GM12878 (cell line): ENCODE measurements at regions of chr20 and their contacts with region 1.

Region 1: GRCh38 chr20:20237093-20237959 is 130.6 kb upstream of the INSM1 start:
- DNase-seq: no peak
- ATAC-seq: peak; percentile 91
- H3K4me3 ChIP-seq: no peak overlapping the region
- H3K27ac ChIP-seq: no peak overlapping the region
- H3K4me1 ChIP-seq: no peaks in the 10 kb centered on the region
- H3K27me3 ChIP-seq: no peaks in the 10 kb centered on the region; a peak in 1 of 4 replicates
- CTCF ChIP-seq: peak; percentile 74 to 78 (median 76)
- EP300 ChIP-seq: no peak
- POLR2A ChIP-seq: no peak
- RAD21 ChIP-seq: peak; percentile 74

Region 2: DNA sequence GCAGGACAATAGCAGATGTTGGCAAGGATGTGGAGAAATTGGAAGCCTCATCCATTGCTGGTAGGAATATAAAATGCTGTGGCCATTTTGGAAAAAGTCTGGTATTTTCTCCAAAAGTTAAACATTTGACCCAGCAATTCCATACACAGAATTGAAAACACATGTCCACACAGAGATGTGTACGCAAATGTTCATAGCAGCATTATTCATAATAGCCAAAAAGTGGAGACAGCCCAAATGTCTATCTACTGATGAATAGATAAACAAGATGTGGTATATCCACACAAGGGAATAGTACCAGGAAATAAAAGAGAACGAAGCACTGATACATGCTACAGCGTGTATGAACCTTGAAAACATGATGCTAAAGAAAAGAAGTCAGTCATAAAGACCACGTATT is 144.5 kb before region 1 on chr20:
- CTCF ChIA-PET with region 1: interaction called, 6 read pairs
- POLR2A ChIA-PET with region 1: no interaction called
- RAD21 ChIA-PET with region 1: interaction called, 7 read pairs
- SMC1A ChIA-PET with region 1: interaction called, 4 read pairs
- in situ Hi-C with region 1: loop called (anchors 5 kb)
- intact Hi-C with region 1: no loop called
- DNase-seq: no peak
- ATAC-seq: no peak
- H3K4me3 ChIP-seq: no peak overlapping the region
- H3K27ac ChIP-seq: no peak overlapping the region
- H3K4me1 ChIP-seq: no peaks in the 10 kb centered on the region
- H3K27me3 ChIP-seq: no peaks in the 10 kb centered on the region; a peak in 1 of 4 replicates
- CTCF ChIP-seq: no peak
- EP300 ChIP-seq: no peak
- POLR2A ChIP-seq: no peak
- RAD21 ChIP-seq: no peak

Region 3: GRCh38 chr20:20184149-20184548 is 53.2 kb before region 1 on chr20:
- CTCF ChIA-PET with region 1: interaction called, 16 read pairs
- POLR2A ChIA-PET with region 1: no interaction called
- RAD21 ChIA-PET with region 1: no interaction called
- SMC1A ChIA-PET with region 1: interaction called, 4 read pairs
- in situ Hi-C with region 1: no loop called
- intact Hi-C with region 1: loop called (anchors 2 kb)
- DNase-seq: no peak
- ATAC-seq: peak; percentile 38; the same call in 1 of the 3 replicates
- H3K4me3 ChIP-seq: no peak overlapping the region
- H3K27ac ChIP-seq: no peak overlapping the region
- H3K4me1 ChIP-seq: peaks cover 3% of the 10 kb centered on the region; the same call in 1 of the 2 replicates
- H3K27me3 ChIP-seq: no peaks in the 10 kb centered on the region
- CTCF ChIP-seq: peak; percentile 20 to 60 (median 36); a peak in 4 of 6 replicates
- EP300 ChIP-seq: no peak
- POLR2A ChIP-seq: no peak
- RAD21 ChIP-seq: peak; percentile 33; the same call in 1 of the 2 replicates

Region 4: GRCh38 chr20:20248620-20249200 is 11.4 kb after region 1 on chr20:
- CTCF ChIA-PET with region 1: interaction called, 36 read pairs
- POLR2A ChIA-PET with region 1: no interaction called
- RAD21 ChIA-PET with region 1: interaction called, 4 read pairs
- SMC1A ChIA-PET with region 1: interaction called, 15 read pairs
- in situ Hi-C with region 1: no loop called
- intact Hi-C with region 1: no loop called
- DNase-seq: peak; percentile 20
- ATAC-seq: peak; percentile 61
- H3K4me3 ChIP-seq: no peak overlapping the region
- H3K27ac ChIP-seq: no peak overlapping the region
- H3K4me1 ChIP-seq: no peaks in the 10 kb centered on the region
- H3K27me3 ChIP-seq: no peaks in the 10 kb centered on the region
- CTCF ChIP-seq: no peak
- EP300 ChIP-seq: no peak
- POLR2A ChIP-seq: no peak
- RAD21 ChIP-seq: no peak